ENCODE measurements at regions of chr17 and their contacts with region 1.

Region 1: DNA sequence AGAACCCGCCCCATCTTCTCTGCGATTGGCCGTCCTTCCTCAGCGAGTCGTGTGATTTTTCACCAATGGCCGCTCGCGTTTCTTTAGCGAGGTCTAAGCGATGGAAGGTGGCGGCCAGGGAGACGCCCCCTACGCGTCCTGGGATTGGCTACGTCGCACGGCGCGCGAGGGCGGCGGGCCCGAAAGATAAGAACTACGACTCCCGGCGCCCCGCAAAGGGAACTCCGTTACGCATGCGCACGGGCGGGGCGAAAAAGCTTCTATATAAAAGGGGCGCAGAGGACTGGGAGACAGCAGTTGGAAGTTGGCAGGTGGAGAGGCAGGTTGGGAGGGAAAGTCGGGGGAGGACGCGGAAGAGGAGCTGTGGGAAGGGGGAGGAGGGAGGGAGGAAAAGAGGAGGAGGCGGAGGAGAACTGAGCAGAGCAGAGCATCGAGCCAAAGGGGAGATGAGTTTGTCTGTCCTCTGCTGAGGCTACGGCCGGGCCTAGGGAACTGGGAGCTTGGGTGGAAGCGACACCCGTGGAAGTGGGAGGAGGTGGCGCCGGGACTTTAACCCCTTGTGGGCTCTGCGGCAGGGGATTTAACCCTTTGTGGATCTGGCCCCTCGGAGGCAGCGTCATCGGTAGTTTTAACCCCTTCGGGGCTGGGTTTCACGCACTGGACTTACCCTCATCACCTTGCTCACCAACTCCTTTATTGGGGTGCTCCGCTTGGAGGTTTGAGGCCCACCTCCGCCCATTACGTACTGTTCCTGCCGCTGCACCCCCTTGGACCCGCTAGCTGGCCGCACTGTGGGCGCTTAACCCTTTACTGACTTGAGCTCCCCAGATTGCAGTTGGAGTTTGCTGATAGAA is at the start of gene HEXIM1:
- DNase-seq: peak; percentile 97 to 100 (median 100)
- H3K4me3 ChIP-seq: peak within 1 kb of the TSS; percentile 91
- H3K4me3 Mint-ChIP-seq: peak within 1 kb of the TSS; percentile 90 to 99 (median 95)
- H3K27ac ChIP-seq: peak within 1 kb of the TSS; percentile 98
- H3K27ac Mint-ChIP-seq: peak within 1 kb of the TSS; percentile 97 to 100 (median 99)
- H3K4me1 ChIP-seq: peaks cover 43% of the 10 kb centered on the region
- H3K4me1 Mint-ChIP-seq: peaks cover 47 to 67% (median 61%) of the 10 kb centered on the region in 3 donors
- H3K27me3 ChIP-seq: no peaks in the 10 kb centered on the region
- H3K27me3 Mint-ChIP-seq: peaks cover 0 to 11% of the 10 kb centered on the region in 2 donors
- total RNA-seq, gene HEXIM1: 48.3 to 51.1 TPM

Region 2: DNA sequence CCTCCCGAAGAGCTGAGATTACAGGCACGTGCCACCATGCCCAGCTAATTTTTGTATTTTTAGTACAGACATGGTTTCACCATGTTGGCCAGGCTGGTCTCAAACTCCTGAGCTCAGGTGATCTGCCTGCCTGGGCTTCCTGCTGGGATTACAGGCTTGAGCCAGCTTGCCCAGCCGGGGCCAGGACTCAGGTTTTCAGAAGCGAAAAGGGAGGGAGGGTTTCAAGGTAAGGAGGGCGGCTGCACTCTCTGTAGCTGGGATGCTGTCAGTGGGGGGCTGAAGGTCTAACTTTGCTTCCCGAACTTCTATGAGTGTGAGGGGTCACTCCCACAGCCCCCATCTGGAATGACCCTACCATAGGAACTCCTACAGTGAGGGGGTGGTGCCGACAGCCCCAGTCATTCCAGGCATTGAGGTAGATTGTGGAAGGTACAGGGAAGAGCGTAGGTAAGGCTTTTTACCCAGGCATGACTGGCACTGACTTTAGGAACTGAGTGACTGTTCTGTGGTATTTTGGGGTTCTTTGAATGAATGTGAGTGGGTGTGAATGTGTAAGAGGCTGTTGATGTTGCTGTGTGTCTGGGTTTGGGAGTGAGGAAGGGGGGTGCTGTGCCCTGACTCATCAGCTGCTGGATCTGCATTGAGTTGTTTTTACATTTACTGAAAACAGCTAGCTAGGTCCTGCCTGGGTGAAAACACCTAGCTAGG is 176.5 kb before region 1 on chr17:
- CTCF ChIA-PET with region 1: no interaction called
- POLR2A ChIA-PET with region 1: no interaction called
- DNase-seq: no peak
- H3K4me3 ChIP-seq: no peak overlapping the region
- H3K4me3 Mint-ChIP-seq: peak overlapping the region in 1 of 7 donors; percentile 67
- H3K27ac ChIP-seq: no peak overlapping the region
- H3K27ac Mint-ChIP-seq: peak overlapping the region in 1 of 8 donors; percentile 22
- H3K4me1 ChIP-seq: peaks cover 26% of the 10 kb centered on the region
- H3K4me1 Mint-ChIP-seq: peaks cover 17 to 31% (median 17%) of the 10 kb centered on the region in 3 donors
- H3K27me3 ChIP-seq: peaks cover 21% of the 10 kb centered on the region
- H3K27me3 Mint-ChIP-seq: peaks cover 25 to 56% of the 10 kb centered on the region in 2 donors

Region 3: GRCh38 chr17:45161019-45161825 is 12.8 kb after region 1 on chr17:
- CTCF ChIA-PET with region 1: interaction called, 152 read pairs
- POLR2A ChIA-PET with region 1: interaction called, 327 read pairs
- DNase-seq: peak; percentile 91 to 99 (median 99)
- H3K4me3 ChIP-seq: peak overlapping the region; percentile 67
- H3K4me3 Mint-ChIP-seq: peak overlapping the region; percentile 92 to 99 (median 94)
- H3K27ac ChIP-seq: peak overlapping the region; percentile 96
- H3K27ac Mint-ChIP-seq: peak overlapping the region; percentile 89 to 99 (median 97)
- H3K4me1 ChIP-seq: peaks cover 27% of the 10 kb centered on the region
- H3K4me1 Mint-ChIP-seq: peaks cover 31 to 51% (median 51%) of the 10 kb centered on the region in 3 donors
- H3K27me3 ChIP-seq: no peaks in the 10 kb centered on the region
- H3K27me3 Mint-ChIP-seq: peaks cover 0 to 2% of the 10 kb centered on the region in 2 donors

Region 4: GRCh38 chr17:45197555-45198334 is 49.3 kb after region 1 on chr17:
- CTCF ChIA-PET with region 1: interaction called, 94 read pairs
- POLR2A ChIA-PET with region 1: interaction called, 14 read pairs
- DNase-seq: peak; percentile 74 to 86 (median 83)
- H3K4me3 ChIP-seq: no peak overlapping the region
- H3K4me3 Mint-ChIP-seq: no peak overlapping the region
- H3K27ac ChIP-seq: no peak overlapping the region
- H3K27ac Mint-ChIP-seq: no peak overlapping the region
- H3K4me1 ChIP-seq: no peaks in the 10 kb centered on the region
- H3K4me1 Mint-ChIP-seq: peaks cover 1 to 5% (median 4%) of the 10 kb centered on the region in 3 donors
- H3K27me3 ChIP-seq: no peaks in the 10 kb centered on the region
- H3K27me3 Mint-ChIP-seq: no peaks in the 10 kb centered on the region

Region 5: DNA sequence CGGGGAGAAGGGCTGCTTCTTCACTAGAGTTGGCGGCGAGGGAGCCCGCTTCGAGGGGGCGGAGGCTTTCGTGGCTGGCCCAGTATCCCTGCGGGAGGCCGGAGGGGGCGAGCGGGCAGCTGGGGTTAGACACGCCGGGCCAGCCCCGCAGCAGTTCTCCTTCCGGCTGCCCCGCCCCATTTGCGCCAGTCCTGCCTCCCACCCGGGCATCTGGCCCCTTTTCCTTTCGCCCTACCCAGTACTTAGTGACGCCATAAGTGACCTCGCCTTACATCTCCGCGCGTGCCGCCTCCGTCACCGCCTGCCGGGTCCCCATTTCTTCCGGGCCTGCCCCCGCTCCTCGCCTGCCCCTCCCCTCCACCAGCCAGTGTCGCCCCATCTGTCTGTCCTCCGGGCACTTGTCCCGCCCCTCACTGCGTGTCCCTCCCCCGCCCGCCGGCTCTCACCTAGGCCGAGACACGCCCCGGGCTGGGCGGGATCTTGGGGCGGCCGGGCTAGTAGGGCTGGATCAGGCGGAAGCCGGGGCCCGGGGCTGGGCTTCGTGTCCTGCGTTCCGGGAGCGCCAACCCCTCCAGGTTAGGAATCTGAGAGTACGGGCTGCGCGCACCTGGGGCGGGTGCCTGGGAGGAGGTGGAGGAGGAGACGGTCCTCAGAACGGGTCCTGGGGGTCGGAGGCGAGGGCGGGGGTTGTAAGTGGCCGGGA is 99.2 kb after region 1 on chr17:
- CTCF ChIA-PET with region 1: interaction called, 5 read pairs
- POLR2A ChIA-PET with region 1: interaction called, 20 read pairs
- DNase-seq: peak; percentile 92 to 99 (median 98)
- H3K4me3 ChIP-seq: peak overlapping the region; percentile 69
- H3K4me3 Mint-ChIP-seq: peak overlapping the region; percentile 85 to 94 (median 88)
- H3K27ac ChIP-seq: peak overlapping the region; percentile 90
- H3K27ac Mint-ChIP-seq: peak overlapping the region; percentile 93 to 100 (median 97)
- H3K4me1 ChIP-seq: peaks cover 56% of the 10 kb centered on the region
- H3K4me1 Mint-ChIP-seq: peaks cover 31 to 71% (median 40%) of the 10 kb centered on the region in 3 donors
- H3K27me3 ChIP-seq: no peaks in the 10 kb centered on the region
- H3K27me3 Mint-ChIP-seq: no peaks in the 10 kb centered on the region